ENCODE measurements at regions of chr5 and their contacts with region 1.

Region 1: DNA sequence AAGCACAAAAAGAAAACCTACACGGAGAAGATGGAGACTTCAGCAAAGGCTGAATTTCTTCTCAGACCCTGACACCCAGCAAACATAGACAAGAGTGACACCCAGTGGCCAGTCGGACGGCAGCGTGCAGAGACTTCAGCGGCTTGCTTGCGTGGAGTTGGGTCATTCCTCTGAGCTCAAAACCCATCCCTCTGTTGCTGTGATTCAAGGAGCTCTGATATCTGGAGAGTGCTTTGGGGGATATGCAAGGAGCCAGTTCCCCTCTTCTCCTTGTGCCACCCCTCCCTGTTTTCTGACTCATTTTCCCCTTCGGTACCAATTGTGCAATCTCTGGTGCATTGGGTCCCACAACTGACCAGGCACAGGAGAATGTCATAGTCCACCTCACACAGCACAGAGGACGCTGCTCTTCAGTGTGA is 27.5 kb downstream of the SH3TC2 start:
- DNase-seq: peak; percentile 72

Region 2: DNA sequence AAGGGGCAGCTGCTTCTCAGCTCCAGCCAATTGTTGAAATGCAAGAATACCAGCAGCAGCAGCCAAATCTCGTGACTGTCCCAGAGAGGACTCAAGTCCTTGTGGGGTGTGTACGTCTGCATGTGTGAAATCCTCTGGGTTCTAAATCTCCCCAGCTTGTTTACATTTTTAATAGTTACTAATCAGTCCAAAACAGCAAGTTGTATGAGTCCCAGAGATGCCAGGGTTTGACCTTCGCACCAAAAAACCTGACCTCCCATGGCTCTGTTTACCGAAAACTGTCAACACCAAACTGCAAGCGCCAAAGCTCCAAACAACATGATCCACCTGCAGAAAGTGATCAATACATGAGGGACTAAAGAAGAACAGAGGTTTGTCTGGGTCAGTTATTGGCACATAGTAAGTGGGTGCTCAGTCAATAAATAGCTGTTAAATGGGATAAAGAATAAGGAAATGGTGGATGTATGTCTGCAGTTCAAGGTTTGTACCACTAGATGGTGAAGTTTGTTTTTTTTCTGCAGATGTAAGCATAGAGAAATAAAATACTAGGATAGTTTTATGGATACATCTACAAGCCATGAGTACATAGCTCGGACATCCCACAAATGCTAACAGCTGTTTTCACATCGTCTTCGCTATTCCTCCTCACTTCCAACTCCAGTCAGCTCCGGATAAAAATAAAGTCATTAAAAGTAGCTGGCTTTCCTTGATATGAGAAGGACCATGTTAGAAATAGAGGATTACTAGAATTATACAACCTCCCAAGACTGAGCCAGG is 294.2 kb before region 1 on chr5:
- CTCF ChIA-PET with region 1: interaction called, 41 read pairs
- POLR2A ChIA-PET with region 1: no interaction called
- DNase-seq: peak; percentile 27

Region 3: GRCh38 chr5:148844433-148845280 is 190.7 kb before region 1 on chr5:
- CTCF ChIA-PET with region 1: no interaction called
- POLR2A ChIA-PET with region 1: no interaction called
- DNase-seq: no peak

Region 4: DNA sequence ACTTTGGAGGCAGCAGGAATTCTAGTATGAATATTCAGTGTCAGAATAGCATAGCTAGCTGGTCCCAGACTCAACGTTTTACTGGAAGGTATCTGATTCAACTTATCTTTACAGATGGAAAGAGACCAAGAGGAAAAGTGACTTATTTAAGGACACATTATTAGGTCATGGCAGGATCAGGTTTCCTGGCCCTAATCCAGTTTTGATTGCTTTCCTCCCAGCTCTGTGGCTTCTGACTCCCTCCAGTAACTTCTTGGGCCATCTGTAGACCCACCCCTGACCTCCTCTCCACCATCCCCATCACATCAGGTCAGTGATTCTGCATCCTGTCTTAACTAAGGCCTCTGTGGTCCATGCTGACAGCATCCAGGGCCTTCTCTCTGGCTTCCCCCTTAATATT is 10.9 kb before region 1 on chr5:
- CTCF ChIA-PET with region 1: interaction called, 11 read pairs
- POLR2A ChIA-PET with region 1: no interaction called
- DNase-seq: no peak

Region 5: GRCh38 chr5:149162401-149163084 is 127.2 kb after region 1 on chr5:
- CTCF ChIA-PET with region 1: no interaction called
- POLR2A ChIA-PET with region 1: no interaction called
- DNase-seq: no peak